ENCODE measurements at regions of chr10 and their contacts with region 1.

Region 1: DNA sequence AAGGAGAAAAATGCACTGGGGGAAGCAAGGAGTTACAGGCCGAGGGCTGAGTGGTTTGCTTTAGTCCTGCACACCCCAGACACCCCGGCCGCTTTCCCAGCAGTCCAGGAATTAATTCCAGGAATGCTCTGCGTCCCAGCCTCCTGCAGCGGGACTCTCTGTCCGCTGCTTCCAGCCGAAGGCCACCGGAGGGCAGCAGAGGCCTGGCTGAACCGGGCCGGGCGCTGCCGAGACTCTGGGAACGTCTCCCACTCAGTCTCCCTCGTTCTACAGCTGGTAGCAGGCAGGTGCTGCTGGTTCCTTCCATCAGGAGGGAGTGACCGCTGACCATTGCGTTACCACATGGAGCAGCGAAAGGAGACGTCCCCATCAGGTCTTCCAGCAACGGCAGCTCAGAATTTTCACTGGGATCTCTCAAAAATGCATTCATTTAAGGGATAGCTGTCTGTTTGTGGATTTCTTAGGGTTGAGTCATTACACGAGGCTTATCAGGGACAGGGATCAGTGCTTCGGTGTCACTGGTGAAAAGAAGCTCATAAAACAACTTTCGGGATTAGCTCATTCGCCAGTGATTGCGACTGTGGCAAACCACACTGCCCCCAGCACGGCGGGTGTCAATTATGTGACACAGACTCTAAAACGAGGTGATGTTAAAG is 24.9 kb upstream of the PITRM1 start:
- DNase-seq: peak; percentile 94
- H3K4me3 Mint-ChIP-seq: no peak overlapping the region
- H3K27ac Mint-ChIP-seq: no peak overlapping the region
- H3K4me1 Mint-ChIP-seq: peaks cover 11% of the 10 kb centered on the region
- H3K27me3 Mint-ChIP-seq: peaks cover 70% of the 10 kb centered on the region

Region 2: GRCh38 chr10:3186368-3186767 is 11.1 kb before region 1 on chr10:
- CTCF ChIA-PET with region 1: interaction called, 16 read pairs
- POLR2A ChIA-PET with region 1: interaction called, 6 read pairs
- intact Hi-C with region 1: loop called (anchors 1 kb)
- DNase-seq: peak; percentile 78
- H3K4me3 Mint-ChIP-seq: no peak overlapping the region
- H3K27ac Mint-ChIP-seq: peak overlapping the region; percentile 19
- H3K4me1 Mint-ChIP-seq: peaks cover 13% of the 10 kb centered on the region
- H3K27me3 Mint-ChIP-seq: peaks cover 32% of the 10 kb centered on the region

Region 3: DNA sequence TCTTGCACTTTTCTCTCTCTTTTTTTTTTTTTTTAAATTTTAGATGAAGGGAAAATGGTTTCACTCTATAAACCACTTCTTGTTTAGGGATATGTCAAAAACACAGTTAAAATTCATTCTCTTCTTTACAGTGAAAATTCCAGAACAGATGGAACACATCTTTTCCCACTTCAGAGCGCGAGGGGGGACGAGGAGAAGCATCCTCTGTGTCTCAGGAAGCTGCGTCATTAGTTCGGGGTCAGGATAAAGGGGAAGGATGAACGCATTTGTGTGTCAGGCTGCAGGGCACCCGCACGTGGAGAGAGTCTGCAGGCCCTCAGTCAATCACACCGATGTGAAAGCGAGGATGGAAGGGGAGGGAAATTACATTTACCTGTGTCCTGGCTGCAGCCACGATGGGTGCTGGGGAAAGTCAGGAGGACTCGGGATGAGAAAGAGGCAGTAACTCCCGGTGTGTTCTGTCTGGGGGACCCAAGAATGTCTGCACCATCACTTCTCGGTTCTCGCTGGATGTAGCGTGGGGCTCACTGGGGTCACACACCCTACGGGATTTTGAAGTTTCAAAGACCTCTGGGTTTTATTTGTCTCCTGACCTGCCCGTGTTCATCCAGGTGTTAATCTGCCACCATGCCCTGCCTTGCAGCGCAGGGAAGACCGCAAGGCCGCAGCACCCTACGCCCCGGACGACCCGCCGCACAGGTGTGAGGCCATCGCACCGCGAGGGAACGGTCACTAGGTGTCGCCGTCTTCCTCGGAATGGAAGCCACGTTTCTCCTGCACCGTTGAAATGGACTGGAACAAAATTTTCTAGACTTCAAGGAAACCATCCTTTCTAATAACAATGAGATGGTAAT is 41.8 kb after region 1 on chr10:
- CTCF ChIA-PET with region 1: interaction called, 11 read pairs
- POLR2A ChIA-PET with region 1: no interaction called
- intact Hi-C with region 1: no loop called
- DNase-seq: peak; percentile 81
- H3K4me3 Mint-ChIP-seq: no peak overlapping the region
- H3K27ac Mint-ChIP-seq: no peak overlapping the region
- H3K4me1 Mint-ChIP-seq: peaks cover 3% of the 10 kb centered on the region
- H3K27me3 Mint-ChIP-seq: peaks cover 32% of the 10 kb centered on the region

Region 4: DNA sequence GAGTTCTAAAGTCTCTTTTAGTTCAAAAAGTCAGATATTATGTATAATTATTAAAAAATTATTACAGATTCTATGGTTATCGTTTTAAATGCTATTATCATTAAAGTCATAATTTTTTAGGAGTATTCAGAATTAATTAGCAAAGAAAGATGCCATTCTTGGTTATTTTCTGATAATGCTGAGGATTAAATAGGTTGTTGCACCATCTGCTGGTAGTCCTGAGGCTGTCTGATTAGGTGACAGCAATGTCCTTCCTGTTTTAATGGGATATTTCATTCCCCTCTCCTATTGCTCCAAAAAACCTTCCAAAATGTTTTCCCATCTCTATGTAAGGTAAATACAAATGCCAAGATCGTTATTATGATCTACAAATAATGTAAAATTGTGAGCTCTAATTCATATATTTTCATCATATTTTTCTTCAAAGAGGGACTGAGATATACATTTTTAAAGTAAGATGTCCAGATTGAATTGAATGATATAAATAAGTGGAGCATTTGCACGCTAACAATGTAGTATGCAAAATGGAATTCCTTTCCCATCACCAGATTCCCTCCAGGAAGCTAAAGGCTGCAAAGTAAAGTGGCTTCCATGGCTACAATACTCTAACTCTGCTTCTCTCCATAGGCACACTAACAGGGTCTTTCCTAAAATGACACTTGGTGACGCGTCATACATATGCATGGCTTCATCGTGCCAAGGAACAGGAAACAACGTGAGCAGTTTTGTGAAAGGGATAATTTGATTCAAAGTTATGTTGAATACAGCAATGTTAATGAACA is 1569.7 kb after region 1 on chr10:
- CTCF ChIA-PET with region 1: interaction called, 18 read pairs
- POLR2A ChIA-PET with region 1: interaction called, 4 read pairs
- intact Hi-C with region 1: loop called (anchors 10 kb)
- DNase-seq: no peak
- H3K4me3 Mint-ChIP-seq: no peak overlapping the region
- H3K27ac Mint-ChIP-seq: no peak overlapping the region
- H3K4me1 Mint-ChIP-seq: peaks cover 5% of the 10 kb centered on the region
- H3K27me3 Mint-ChIP-seq: peaks cover 20% of the 10 kb centered on the region